ENCODE measurements at regions of chr15 and their contacts with region 1.

Region 1: GRCh38 chr15:49620658-49621368 is at the starts of genes DTWD1 and FAM227B:
- DNase-seq: peak; percentile 98
- H3K4me3 Mint-ChIP-seq: peak within 1 kb of the TSS; percentile 97
- H3K27ac Mint-ChIP-seq: peak within 1 kb of the TSS; percentile 98
- H3K4me1 Mint-ChIP-seq: peaks cover 38% of the 10 kb centered on the region
- H3K27me3 Mint-ChIP-seq: no peaks in the 10 kb centered on the region
- total RNA-seq, gene DTWD1: 24.9 and 25.8 TPM in 2 replicates
- total RNA-seq, gene FAM227B: 2.1 and 2.7 TPM in 2 replicates

Region 2: GRCh38 chr15:48330855-48331795 is 1289.7 kb before region 1 on chr15 and contains the start of gene DUT:
- intact Hi-C with region 1: loop called (anchors 5 kb)
- DNase-seq: peak; percentile 96
- H3K4me3 Mint-ChIP-seq: peak within 1 kb of the TSS; percentile 95
- H3K27ac Mint-ChIP-seq: peak within 1 kb of the TSS; percentile 94
- H3K4me1 Mint-ChIP-seq: peaks cover 29% of the 10 kb centered on the region
- H3K27me3 Mint-ChIP-seq: no peaks in the 10 kb centered on the region
- total RNA-seq, gene DUT: 259 and 273 TPM in 2 replicates

Region 3: GRCh38 chr15:49046220-49047102 is 574.4 kb before region 1 on chr15 and contains the start of gene SECISBP2L:
- intact Hi-C with region 1: loop called (anchors 5 kb)
- DNase-seq: peak; percentile 97
- H3K4me3 Mint-ChIP-seq: peak within 1 kb of the TSS; percentile 98
- H3K27ac Mint-ChIP-seq: peak within 1 kb of the TSS; percentile 90
- H3K4me1 Mint-ChIP-seq: peaks cover 22% of the 10 kb centered on the region
- H3K27me3 Mint-ChIP-seq: no peaks in the 10 kb centered on the region
- total RNA-seq, gene SECISBP2L: 38.1 and 40.0 TPM in 2 replicates

Region 4: DNA sequence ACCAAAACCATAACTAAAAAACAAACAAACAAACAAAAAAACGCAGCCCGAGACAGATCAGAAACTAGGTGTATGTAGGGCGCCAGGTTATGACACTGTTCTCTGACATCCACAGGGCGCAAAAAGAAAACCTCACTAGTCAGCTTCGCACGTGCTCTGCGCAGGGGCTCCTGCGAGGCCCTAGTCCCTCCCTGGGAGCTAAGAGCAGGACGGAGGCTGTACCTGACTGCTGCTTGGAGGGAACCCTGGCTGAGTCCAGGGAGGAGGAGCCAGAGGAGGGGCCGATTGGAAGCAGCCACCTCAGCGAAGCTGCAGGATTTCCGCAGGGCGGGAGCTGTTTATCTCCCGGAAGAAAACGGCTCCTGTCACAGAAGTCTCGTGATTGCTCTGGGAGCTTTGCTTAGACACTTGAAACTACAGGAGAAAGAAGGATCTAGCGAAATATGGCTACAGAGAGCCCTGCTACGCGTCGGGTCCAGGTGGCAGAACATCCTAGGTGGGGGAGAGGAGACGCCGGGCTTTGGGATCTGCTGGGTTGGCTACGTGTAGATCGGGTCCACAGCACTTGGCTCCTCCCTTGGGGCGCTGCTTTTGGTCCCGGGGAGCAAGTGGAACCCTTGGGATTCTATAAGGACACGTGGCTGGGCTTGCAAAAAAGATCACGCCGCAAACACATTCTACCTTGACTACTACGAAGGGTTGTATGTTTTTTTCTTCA is 450.8 kb before region 1 on chr15 and contains the start of gene GALK2:
- intact Hi-C with region 1: loop called (anchors 5 kb)
- DNase-seq: peak; percentile 95
- H3K4me3 Mint-ChIP-seq: peak within 1 kb of the TSS; percentile 100
- H3K27ac Mint-ChIP-seq: peak within 1 kb of the TSS; percentile 99
- H3K4me1 Mint-ChIP-seq: peaks cover 26% of the 10 kb centered on the region
- H3K27me3 Mint-ChIP-seq: no peaks in the 10 kb centered on the region
- total RNA-seq, gene GALK2: 24.7 and 25.5 TPM in 2 replicates

Region 5: GRCh38 chr15:49286649-49287404 is 334.0 kb before region 1 on chr15:
- intact Hi-C with region 1: loop called (anchors 5 kb)
- DNase-seq: no peak
- H3K4me3 Mint-ChIP-seq: peak overlapping the region; percentile 46
- H3K27ac Mint-ChIP-seq: peak overlapping the region; percentile 85
- H3K4me1 Mint-ChIP-seq: peaks cover 43% of the 10 kb centered on the region
- H3K27me3 Mint-ChIP-seq: no peaks in the 10 kb centered on the region

Region 6: DNA sequence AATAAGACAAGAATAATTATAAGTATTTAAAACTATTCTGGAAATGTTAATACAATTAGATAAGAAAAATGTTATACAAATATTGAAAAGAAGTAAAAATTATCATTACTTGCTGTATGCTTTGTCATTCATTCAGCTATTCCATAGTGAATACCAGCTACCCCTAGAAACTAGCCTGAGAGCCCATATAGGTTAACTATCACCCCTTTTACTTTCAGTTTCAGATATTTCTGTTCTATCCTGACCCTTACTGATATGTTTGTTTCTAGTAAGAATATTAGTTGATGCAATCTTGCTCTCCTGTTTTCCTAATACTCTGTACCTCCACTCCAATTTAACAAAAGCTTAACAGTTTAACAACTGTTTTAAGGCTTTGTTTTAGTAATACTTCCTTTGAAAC is 31.8 kb before region 1 on chr15:
- intact Hi-C with region 1: no loop called
- DNase-seq: no peak
- H3K4me3 Mint-ChIP-seq: no peak overlapping the region
- H3K27ac Mint-ChIP-seq: no peak overlapping the region
- H3K4me1 Mint-ChIP-seq: peaks cover 2% of the 10 kb centered on the region
- H3K27me3 Mint-ChIP-seq: no peaks in the 10 kb centered on the region

Region 7: DNA sequence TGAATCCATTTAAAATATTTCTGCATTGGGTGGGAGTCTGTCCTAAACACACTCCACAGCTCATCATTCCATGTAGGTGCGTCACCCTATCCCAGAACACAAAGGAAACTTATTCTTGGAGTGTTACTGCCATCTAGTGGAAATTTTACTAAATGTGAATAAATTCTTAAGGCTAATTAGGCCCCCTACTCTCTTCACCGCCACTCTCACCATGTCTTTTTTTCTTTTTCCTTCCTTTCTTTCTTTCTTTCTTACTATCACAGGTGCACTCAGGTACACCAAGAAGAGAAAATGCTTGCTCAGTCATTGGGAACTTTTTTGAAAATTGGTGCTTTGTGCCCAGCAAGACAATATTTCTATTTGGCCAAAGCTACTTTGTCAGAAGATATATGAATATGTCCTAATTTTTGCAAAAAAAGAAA is 524.6 kb after region 1 on chr15:
- intact Hi-C with region 1: loop called (anchors 2 kb)
- DNase-seq: peak; percentile 62
- H3K4me3 Mint-ChIP-seq: no peak overlapping the region
- H3K27ac Mint-ChIP-seq: no peak overlapping the region
- H3K4me1 Mint-ChIP-seq: peaks cover 45% of the 10 kb centered on the region
- H3K27me3 Mint-ChIP-seq: no peaks in the 10 kb centered on the region

Region 8: DNA sequence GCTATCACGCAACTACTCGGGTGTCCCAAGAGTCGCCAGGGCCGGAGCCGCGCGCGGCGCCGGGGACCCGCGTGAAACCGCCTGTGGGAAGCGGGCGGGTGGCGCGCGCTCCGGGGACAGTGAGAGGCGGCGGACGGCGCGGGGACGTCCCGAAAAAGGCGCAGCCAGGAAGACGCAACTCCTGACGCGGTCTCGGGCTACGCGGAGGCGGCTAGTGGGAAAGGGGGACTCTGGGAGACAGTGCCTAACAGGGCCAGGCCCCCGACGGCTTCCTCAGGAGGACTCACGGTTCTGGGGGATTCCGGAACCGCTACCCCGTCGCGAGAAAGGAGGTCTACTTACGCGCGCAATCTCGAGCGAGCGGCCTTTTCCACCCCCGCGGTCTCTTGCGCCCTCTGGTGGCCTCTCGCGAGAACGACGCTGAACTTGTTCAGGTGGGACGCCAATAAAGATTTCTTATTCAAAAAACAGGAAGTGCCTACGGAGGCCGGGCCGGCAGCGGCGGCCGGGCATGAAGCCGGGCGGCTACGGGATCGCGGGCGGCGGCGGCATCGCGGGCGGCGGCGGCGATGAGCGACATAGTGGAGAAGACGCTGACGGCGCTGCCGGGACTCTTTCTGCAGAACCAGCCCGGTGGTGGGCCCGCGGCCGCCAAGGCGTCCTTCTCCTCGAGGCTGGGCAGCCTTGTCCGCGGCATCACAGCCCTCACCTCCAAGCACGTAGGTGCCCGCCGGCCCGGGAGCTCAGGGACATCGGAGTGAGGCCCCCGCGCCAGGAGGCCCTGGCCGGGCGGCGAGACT is 1287.6 kb after region 1 on chr15 and contains the start of gene AP4E1:
- intact Hi-C with region 1: loop called (anchors 5 kb)
- DNase-seq: peak; percentile 98
- H3K4me3 Mint-ChIP-seq: peak within 1 kb of the TSS; percentile 87
- H3K27ac Mint-ChIP-seq: peak within 1 kb of the TSS; percentile 97
- H3K4me1 Mint-ChIP-seq: peaks cover 16% of the 10 kb centered on the region
- H3K27me3 Mint-ChIP-seq: no peaks in the 10 kb centered on the region
- total RNA-seq, gene AP4E1: 16.5 TPM in 2 replicates

Measured in activated CD4-positive, alpha-beta T cell treated with anti-CD3 and anti-CD28 coated beads, Interleukin-2, amount 10 ng/mL, durations not matched to agents 24 days and 14 days (primary cell).